Dorsolateral prefrontal cortex (tissue), 120 donors: ENCODE measurements at regions of chr2 and their contacts with region 1.

Region 1: GRCh38 chr2:97645695-97646629 is at the start of gene COX5B:
- DNase-seq: peak; percentile 98 to 100 (median 99)
- H3K4me3 ChIP-seq: peak within 1 kb of the TSS; percentile 65 to 100 (median 98)
- H3K27ac ChIP-seq: peak within 1 kb of the TSS; percentile 74 to 99 (median 95)
- H3K27me3 ChIP-seq: no peaks in the 10 kb centered on the region
- CTCF ChIP-seq: peak in 50 of 56 donors; percentile 13 to 66 (median 39)
- total RNA-seq, gene COX5B: 245 to 509 (median 381) TPM

Region 2: GRCh38 chr2:96065381-96065930 is 1580.5 kb before region 1 on chr2:
- intact Hi-C with region 1: loop called in 1 of 2 experiments (anchors 10 kb)
- DNase-seq: peak in 2 of 10 donors; percentile 21 to 50
- H3K4me3 ChIP-seq: no peak overlapping the region
- H3K27ac ChIP-seq: peak overlapping the region in 1 of 59 donors; percentile 6
- H3K27me3 ChIP-seq: no peaks in the 10 kb centered on the region
- CTCF ChIP-seq: no peak

Region 3: DNA sequence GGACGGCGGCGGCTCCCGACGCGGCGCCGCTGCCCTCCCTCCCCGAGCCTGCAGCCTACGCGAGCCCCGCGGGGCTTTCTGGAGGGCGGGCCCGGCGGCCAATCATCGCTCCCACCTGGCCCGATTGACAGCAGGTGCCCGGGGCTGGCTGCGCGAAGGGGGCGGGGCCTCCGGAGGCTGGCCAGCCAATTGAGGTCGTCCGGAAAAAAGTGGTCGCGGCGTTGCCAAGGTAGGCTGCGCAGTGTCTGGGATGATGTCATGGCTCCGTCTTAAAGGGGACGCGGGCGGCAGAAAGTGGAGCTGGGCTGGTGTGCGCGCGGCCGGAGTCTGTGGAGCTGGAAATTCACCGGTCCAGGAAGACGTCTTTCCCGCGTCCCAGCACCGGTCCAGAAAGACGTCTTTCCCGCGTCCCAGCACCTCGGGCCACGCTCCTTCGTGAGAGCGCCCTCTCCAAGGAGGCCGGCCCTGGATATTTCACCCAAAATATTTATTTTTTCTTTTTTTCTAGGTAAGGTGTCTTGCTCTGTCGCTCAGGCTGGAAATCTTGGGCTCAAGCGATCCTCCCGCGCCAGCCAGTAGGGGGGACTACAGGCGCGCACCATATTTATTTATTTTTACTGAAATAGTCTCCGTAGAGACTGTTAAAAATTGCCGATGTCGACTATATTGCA is 18.1 kb after region 1 on chr2 and contains the start of gene ACTR1B:
- intact Hi-C with region 1: loop called (anchors 1 kb)
- DNase-seq: peak; percentile 95 to 99 (median 98)
- H3K4me3 ChIP-seq: peak within 1 kb of the TSS; percentile 58 to 98 (median 83)
- H3K27ac ChIP-seq: peak within 1 kb of the TSS; percentile 70 to 99 (median 96)
- H3K27me3 ChIP-seq: no peaks in the 10 kb centered on the region
- CTCF ChIP-seq: peak in 53 of 56 donors; percentile 27 to 69 (median 50)
- total RNA-seq, gene ACTR1B: 72.4 to 175 (median 133) TPM

Region 4: DNA sequence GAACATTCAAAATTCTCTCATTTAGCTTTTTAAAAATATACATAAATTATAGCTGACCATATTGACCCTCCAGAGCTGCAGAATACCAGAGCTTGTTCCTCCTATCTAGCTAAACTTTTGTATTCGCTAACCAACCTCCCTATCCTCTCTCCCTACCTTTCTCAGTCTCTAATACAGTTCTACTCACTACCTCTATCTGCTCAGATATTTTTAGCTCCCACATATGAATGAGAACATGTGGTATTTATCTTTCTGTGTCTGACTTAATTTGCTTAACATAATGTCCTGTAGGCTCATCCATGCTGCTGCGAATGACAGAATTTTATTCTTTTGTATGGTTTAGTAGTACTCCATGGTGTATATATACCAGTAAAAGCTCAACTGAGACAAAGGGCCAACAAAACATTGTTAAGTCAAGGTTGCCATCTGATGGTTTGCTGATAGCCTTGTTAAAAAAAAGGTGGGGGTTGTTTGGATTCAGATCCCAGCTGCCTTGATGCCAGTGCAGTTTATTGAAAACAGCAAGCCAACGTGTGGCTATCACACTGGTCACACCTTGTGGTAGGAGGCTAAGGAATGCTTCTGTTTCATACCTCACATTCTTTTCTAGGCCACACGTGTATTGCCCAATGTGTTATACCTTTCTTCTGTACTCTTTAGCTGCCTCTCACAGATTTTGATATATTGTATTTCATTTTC is 542.5 kb after region 1 on chr2:
- intact Hi-C with region 1: no loop called
- DNase-seq: no peak
- H3K4me3 ChIP-seq: no peak overlapping the region
- H3K27ac ChIP-seq: no peak overlapping the region
- H3K27me3 ChIP-seq: no peaks in the 10 kb centered on the region
- CTCF ChIP-seq: no peak